Activated CD4-positive, alpha-beta T cell treated with anti-CD3 and anti-CD28 coated beads, Interleukin-2, amount 10 ng/mL, durations not matched to agents 7 days and 5 days (primary cell): ENCODE measurements at regions of chr9 and their contacts with region 1.

Region 1: GRCh38 chr9:121698627-121699570 is 47.5 kb downstream of the DAB2IP start:
- DNase-seq: peak; percentile 71
- H3K4me3 Mint-ChIP-seq: peak overlapping the region; percentile 43
- H3K27ac Mint-ChIP-seq: no peak overlapping the region
- H3K4me1 Mint-ChIP-seq: peaks cover 11% of the 10 kb centered on the region
- H3K27me3 Mint-ChIP-seq: peaks cover 51% of the 10 kb centered on the region

Region 2: GRCh38 chr9:121686930-121687541 is 11.9 kb before region 1 on chr9:
- CTCF ChIA-PET with region 1: interaction called, 16 read pairs
- POLR2A ChIA-PET with region 1: no interaction called
- DNase-seq: peak; percentile 75
- H3K4me3 Mint-ChIP-seq: no peak overlapping the region
- H3K27ac Mint-ChIP-seq: no peak overlapping the region
- H3K4me1 Mint-ChIP-seq: no peaks in the 10 kb centered on the region
- H3K27me3 Mint-ChIP-seq: peaks cover 5% of the 10 kb centered on the region

Region 3: DNA sequence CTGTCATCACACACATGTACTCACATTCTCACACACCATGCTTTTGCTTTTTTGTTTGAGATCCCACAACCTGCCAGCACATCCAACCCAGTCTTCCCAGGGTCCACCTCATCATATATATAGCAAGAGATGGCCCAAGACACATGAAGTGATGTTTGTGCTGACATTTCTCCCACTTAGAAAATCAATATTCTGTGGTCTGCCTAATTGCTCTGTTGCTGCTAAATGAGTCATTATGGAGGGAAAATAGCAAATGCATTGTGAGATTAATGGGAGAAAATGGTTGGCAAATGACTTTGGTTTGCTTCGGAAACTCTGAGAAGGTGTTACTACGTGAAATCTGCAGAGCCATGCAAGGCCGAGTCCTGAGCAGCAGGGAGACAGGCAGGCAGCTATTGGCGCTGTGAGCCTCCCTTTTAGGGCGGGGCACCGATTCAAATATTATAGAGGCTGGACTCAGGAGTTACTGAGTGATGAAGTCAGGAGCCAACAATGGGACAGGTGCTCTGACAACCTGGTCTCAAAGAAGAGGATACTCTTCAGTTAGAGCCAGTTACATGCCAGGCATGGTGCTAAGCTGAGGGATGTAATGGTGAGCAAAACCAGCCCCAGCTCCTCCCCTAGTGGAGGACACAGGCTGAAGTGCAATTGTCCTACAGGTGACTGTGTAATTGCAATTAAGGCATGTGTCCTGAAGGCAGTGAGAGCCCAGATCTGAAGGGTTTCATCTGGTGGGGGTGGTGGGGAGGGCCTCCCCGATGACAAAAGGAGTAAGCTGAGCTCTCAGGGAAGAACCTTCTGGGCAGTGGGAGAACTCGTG is 15.4 kb after region 1 on chr9:
- CTCF ChIA-PET with region 1: no interaction called
- POLR2A ChIA-PET with region 1: no interaction called
- DNase-seq: no peak
- H3K4me3 Mint-ChIP-seq: no peak overlapping the region
- H3K27ac Mint-ChIP-seq: no peak overlapping the region
- H3K4me1 Mint-ChIP-seq: no peaks in the 10 kb centered on the region
- H3K27me3 Mint-ChIP-seq: no peaks in the 10 kb centered on the region

Region 4: DNA sequence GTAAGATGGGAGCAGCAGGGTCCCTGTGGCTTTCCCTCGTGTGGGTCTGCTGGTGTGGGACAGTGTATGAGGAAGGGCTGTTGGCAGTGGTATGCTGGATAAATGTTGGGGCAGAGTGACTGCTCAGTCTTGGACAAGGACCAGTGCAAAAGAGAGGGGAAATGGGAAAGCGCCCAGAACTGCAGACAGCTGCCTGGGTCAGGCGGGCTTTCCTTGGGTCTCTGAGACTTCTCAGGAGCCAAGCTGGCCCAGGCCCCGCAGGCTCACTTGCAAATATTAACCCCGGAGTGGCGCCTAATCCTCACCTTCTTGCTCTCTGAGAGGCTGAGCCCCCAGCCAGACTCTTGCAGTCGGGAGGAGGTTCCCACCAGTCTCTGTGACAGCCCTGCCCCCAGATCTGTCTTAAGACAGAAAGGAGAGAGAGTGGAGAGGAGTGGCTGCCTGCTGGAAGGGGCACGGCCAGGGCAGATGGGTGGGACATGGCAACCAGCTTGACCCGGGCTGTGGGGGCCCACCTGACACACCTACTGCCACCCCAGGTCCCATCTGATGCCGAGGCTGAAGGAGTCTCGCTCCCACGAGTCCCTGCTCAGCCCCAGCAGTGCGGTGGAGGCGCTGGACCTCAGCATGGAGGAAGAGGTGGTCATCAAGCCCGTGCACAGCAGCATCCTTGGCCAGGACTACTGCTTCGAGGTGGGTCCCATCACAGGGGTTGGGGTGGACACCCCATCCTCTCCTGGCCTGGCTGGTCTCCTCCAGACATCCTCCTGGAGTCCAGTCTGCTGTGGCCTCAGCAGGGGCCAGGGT is 57.8 kb after region 1 on chr9:
- CTCF ChIA-PET with region 1: no interaction called
- POLR2A ChIA-PET with region 1: no interaction called
- DNase-seq: no peak
- H3K4me3 Mint-ChIP-seq: no peak overlapping the region
- H3K27ac Mint-ChIP-seq: no peak overlapping the region
- H3K4me1 Mint-ChIP-seq: no peaks in the 10 kb centered on the region
- H3K27me3 Mint-ChIP-seq: no peaks in the 10 kb centered on the region

Region 5: GRCh38 chr9:121895818-121896544 is 197.1 kb after region 1 on chr9:
- CTCF ChIA-PET with region 1: no interaction called
- POLR2A ChIA-PET with region 1: no interaction called
- DNase-seq: no peak
- H3K4me3 Mint-ChIP-seq: no peak overlapping the region
- H3K27ac Mint-ChIP-seq: no peak overlapping the region
- H3K4me1 Mint-ChIP-seq: no peaks in the 10 kb centered on the region
- H3K27me3 Mint-ChIP-seq: no peaks in the 10 kb centered on the region